ENCODE measurements at regions of chr1 and their contacts with region 1.

Region 1: GRCh38 chr1:155829386-155829785 is 27.6 kb downstream of the GON4L start:
- DNase-seq: no peak
- ATAC-seq: no peak
- H3K4me3 ChIP-seq: no peak overlapping the region
- H3K4me3 Mint-ChIP-seq: no peak overlapping the region
- H3K27ac ChIP-seq: no peak overlapping the region
- H3K27ac Mint-ChIP-seq: no peak overlapping the region
- H3K4me1 ChIP-seq: peaks cover 0 to 3% of the 10 kb centered on the region in 2 experiments
- H3K4me1 Mint-ChIP-seq: peaks cover 10 to 17% (median 17%) of the 10 kb centered on the region in 3 donors
- H3K27me3 ChIP-seq: no peaks in the 10 kb centered on the region
- H3K27me3 Mint-ChIP-seq: no peaks in the 10 kb centered on the region

Region 2: GRCh38 chr1:155847823-155848529 is 18.6 kb after region 1 on chr1:
- CTCF ChIA-PET with region 1: no interaction called
- POLR2A ChIA-PET with region 1: interaction called, 4 to 11 read pairs
- DNase-seq: no peak
- ATAC-seq: peak in 3 of 4 experiments; percentile 38 to 66 (median 44)
- H3K4me3 ChIP-seq: no peak overlapping the region
- H3K4me3 Mint-ChIP-seq: peak overlapping the region in 1 of 3 donors; percentile 9
- H3K27ac ChIP-seq: no peak overlapping the region
- H3K27ac Mint-ChIP-seq: peak overlapping the region; percentile 2 to 72
- H3K4me1 ChIP-seq: peaks cover 10 to 41% of the 10 kb centered on the region in 2 experiments
- H3K4me1 Mint-ChIP-seq: peaks cover 63 to 74% (median 73%) of the 10 kb centered on the region in 3 donors
- H3K27me3 ChIP-seq: no peaks in the 10 kb centered on the region
- H3K27me3 Mint-ChIP-seq: no peaks in the 10 kb centered on the region

Region 3: DNA sequence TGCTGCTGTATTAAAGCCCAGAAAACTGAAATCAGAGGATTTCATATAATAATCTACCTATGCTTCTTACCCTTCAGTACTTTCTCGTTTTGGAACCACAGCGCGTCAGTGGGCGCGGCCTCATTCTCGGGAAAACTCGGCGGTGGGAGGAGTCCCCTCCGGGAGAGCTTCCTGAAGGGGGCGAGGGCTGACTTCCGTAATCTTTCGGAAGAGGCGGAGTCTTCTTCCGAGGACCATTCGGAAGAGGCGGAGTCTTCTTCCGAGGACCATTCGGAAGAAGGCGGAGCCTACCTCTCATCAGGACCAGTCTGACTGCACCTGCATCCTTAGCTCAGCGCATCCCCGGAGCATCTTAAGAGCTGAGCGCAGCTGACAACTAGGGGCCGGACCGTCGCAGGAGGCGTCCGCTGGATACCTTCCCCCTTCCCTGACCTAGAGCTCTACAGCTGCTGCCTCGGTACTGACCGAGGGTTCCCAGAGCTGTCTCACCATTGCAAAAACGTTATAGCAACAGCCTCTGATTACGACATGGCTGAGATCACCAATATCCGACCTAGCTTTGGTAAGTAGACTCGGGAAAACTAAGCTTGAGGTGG is 29.9 kb after region 1 on chr1 and contains the start of gene SYT11:
- CTCF ChIA-PET with region 1: no interaction called
- POLR2A ChIA-PET with region 1: no interaction called
- DNase-seq: peak; percentile 82 to 97 (median 87)
- ATAC-seq: peak; percentile 86 to 92 (median 90)
- H3K4me3 ChIP-seq: peak within 1 kb of the TSS; percentile 53 to 61
- H3K4me3 Mint-ChIP-seq: peak within 1 kb of the TSS; percentile 89 to 98 (median 90)
- H3K27ac ChIP-seq: peak within 1 kb of the TSS; percentile 87
- H3K27ac Mint-ChIP-seq: peak within 1 kb of the TSS; percentile 93 to 94
- H3K4me1 ChIP-seq: peaks cover 8 to 43% of the 10 kb centered on the region in 2 experiments
- H3K4me1 Mint-ChIP-seq: peaks cover 34 to 51% (median 49%) of the 10 kb centered on the region in 3 donors
- H3K27me3 ChIP-seq: peaks cover 0 to 12% of the 10 kb centered on the region in 2 experiments
- H3K27me3 Mint-ChIP-seq: peaks cover 2 to 15% of the 10 kb centered on the region in 2 donors
- total RNA-seq, gene SYT11: 8.6 to 19.8 (median 9.0) TPM

Region 4: GRCh38 chr1:155892801-155893200 is 63.4 kb after region 1 on chr1:
- CTCF ChIA-PET with region 1: no interaction called
- POLR2A ChIA-PET with region 1: no interaction called
- DNase-seq: no peak
- ATAC-seq: no peak
- H3K4me3 ChIP-seq: no peak overlapping the region
- H3K4me3 Mint-ChIP-seq: peak overlapping the region in 1 of 3 donors; percentile 38
- H3K27ac ChIP-seq: no peak overlapping the region
- H3K27ac Mint-ChIP-seq: peak overlapping the region; percentile 82 to 88
- H3K4me1 ChIP-seq: peaks cover 9 to 14% of the 10 kb centered on the region in 2 experiments
- H3K4me1 Mint-ChIP-seq: peaks cover 17 to 18% (median 17%) of the 10 kb centered on the region in 3 donors
- H3K27me3 ChIP-seq: no peaks in the 10 kb centered on the region
- H3K27me3 Mint-ChIP-seq: no peaks in the 10 kb centered on the region

Region 5: GRCh38 chr1:155911156-155912055 is 82.0 kb after region 1 on chr1 and contains the start of gene RIT1:
- CTCF ChIA-PET with region 1: no interaction called
- POLR2A ChIA-PET with region 1: interaction called in 1 of 2 experiments, 10 read pairs
- DNase-seq: peak; percentile 62 to 91 (median 78)
- ATAC-seq: peak; percentile 96 to 99 (median 98)
- H3K4me3 ChIP-seq: peak within 1 kb of the TSS; percentile 77 to 90
- H3K4me3 Mint-ChIP-seq: peak within 1 kb of the TSS; percentile 93 to 98 (median 97)
- H3K27ac ChIP-seq: peak within 1 kb of the TSS; percentile 78
- H3K27ac Mint-ChIP-seq: peak within 1 kb of the TSS; percentile 95 to 97
- H3K4me1 ChIP-seq: peaks cover 11 to 24% of the 10 kb centered on the region in 2 experiments
- H3K4me1 Mint-ChIP-seq: peaks cover 24 to 31% (median 26%) of the 10 kb centered on the region in 3 donors
- H3K27me3 ChIP-seq: no peaks in the 10 kb centered on the region
- H3K27me3 Mint-ChIP-seq: no peaks in the 10 kb centered on the region
- total RNA-seq, gene RIT1: 35.3 to 56.4 (median 39.2) TPM

Region 6: GRCh38 chr1:156245451-156246232 is 416.3 kb after region 1 on chr1:
- CTCF ChIA-PET with region 1: no interaction called
- POLR2A ChIA-PET with region 1: no interaction called
- DNase-seq: peak in 31 of 35 experiments; percentile 12 to 59 (median 27)
- ATAC-seq: peak; percentile 60 to 73 (median 66)
- H3K4me3 ChIP-seq: peak overlapping the region; percentile 46 to 66
- H3K4me3 Mint-ChIP-seq: peak overlapping the region; percentile 78 to 83 (median 82)
- H3K27ac ChIP-seq: peak overlapping the region; percentile 18
- H3K27ac Mint-ChIP-seq: peak overlapping the region in 1 of 2 donors; percentile 76
- H3K4me1 ChIP-seq: peaks cover 4 to 21% of the 10 kb centered on the region in 2 experiments
- H3K4me1 Mint-ChIP-seq: peaks cover 13 to 25% (median 16%) of the 10 kb centered on the region in 3 donors
- H3K27me3 ChIP-seq: peaks cover 0 to 6% of the 10 kb centered on the region in 2 experiments
- H3K27me3 Mint-ChIP-seq: no peaks in the 10 kb centered on the region